Thyroid gland (tissue), 4 donors: ENCODE measurements at regions of chr12 and their contacts with region 1.

Region 1: GRCh38 chr12:64256166-64256800 is 34.2 kb upstream of the KICS2 start:
- DNase-seq: no peak
- H3K4me3 ChIP-seq: no peak overlapping the region
- H3K27ac ChIP-seq: no peak overlapping the region
- H3K4me1 ChIP-seq: no peaks in the 10 kb centered on the region
- H3K27me3 ChIP-seq: no peaks in the 10 kb centered on the region
- CTCF ChIP-seq: peak; percentile 31 to 86 (median 64)
- POLR2A ChIP-seq: no peak

Region 2: DNA sequence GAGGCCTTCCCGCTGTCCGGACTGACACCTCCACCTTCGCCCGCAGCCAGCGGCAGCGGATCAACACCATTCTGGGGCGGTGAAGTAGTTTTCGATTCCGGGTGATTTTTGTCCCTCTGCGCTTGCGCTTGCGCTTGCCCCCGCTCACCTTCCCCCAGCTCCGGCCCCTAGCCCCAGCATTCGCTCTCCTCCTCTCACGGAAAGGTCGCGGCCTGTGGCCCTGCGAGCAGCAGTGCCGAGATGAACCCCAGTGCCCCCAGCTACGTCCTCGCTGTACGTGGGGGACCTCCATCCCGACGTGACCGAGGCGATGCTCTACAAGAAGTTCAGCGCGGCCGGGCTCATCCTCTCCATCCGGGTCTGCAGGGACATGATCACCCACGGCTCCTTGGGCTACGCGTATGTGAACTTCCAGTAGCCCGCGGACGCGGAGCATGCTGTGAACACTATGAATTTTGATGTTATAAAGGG is 434.5 kb before region 1 on chr12:
- intact Hi-C with region 1: loop called (anchors 5 kb)
- DNase-seq: peak; percentile 11 to 16
- H3K4me3 ChIP-seq: peak overlapping the region in 1 of 3 donors; percentile 21
- H3K27ac ChIP-seq: no peak overlapping the region
- H3K4me1 ChIP-seq: no peaks in the 10 kb centered on the region
- H3K27me3 ChIP-seq: no peaks in the 10 kb centered on the region
- CTCF ChIP-seq: no peak
- POLR2A ChIP-seq: no peak

Region 3: GRCh38 chr12:63838411-63838810 is 417.9 kb before region 1 on chr12:
- intact Hi-C with region 1: loop called (anchors 2 kb)
- DNase-seq: no peak
- H3K4me3 ChIP-seq: no peak overlapping the region
- H3K27ac ChIP-seq: no peak overlapping the region
- H3K4me1 ChIP-seq: no peaks in the 10 kb centered on the region
- H3K27me3 ChIP-seq: no peaks in the 10 kb centered on the region
- CTCF ChIP-seq: no peak
- POLR2A ChIP-seq: no peak

Region 4: GRCh38 chr12:64019118-64019517 is 237.2 kb before region 1 on chr12:
- intact Hi-C with region 1: no loop called
- DNase-seq: no peak
- H3K4me3 ChIP-seq: no peak overlapping the region
- H3K27ac ChIP-seq: no peak overlapping the region
- H3K4me1 ChIP-seq: peaks cover 22 to 23% of the 10 kb centered on the region in 2 donors
- H3K27me3 ChIP-seq: no peaks in the 10 kb centered on the region
- CTCF ChIP-seq: no peak
- POLR2A ChIP-seq: no peak

Region 5: DNA sequence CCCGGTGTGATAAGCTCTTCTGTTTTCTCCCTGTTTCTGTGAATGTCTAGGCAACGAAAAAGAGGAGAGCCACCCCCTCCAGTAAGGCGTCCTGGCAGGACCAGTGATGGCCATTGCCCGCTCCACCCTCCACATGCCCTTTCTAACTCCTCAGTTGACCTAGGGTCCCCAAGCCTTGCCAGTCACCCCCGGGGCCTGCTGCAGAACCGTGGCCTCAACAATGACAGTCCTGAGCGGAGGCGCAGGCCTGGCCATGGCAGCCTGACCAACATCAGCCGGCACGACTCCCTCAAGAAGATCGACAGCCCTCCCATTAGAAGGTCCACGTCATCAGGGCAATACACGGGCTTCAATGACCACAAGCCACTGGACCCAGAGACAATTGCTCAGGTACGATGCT is 128.5 kb before region 1 on chr12:
- intact Hi-C with region 1: no loop called
- DNase-seq: no peak
- H3K4me3 ChIP-seq: no peak overlapping the region
- H3K27ac ChIP-seq: no peak overlapping the region
- H3K4me1 ChIP-seq: no peaks in the 10 kb centered on the region
- H3K27me3 ChIP-seq: no peaks in the 10 kb centered on the region
- CTCF ChIP-seq: no peak
- POLR2A ChIP-seq: no peak

Region 6: DNA sequence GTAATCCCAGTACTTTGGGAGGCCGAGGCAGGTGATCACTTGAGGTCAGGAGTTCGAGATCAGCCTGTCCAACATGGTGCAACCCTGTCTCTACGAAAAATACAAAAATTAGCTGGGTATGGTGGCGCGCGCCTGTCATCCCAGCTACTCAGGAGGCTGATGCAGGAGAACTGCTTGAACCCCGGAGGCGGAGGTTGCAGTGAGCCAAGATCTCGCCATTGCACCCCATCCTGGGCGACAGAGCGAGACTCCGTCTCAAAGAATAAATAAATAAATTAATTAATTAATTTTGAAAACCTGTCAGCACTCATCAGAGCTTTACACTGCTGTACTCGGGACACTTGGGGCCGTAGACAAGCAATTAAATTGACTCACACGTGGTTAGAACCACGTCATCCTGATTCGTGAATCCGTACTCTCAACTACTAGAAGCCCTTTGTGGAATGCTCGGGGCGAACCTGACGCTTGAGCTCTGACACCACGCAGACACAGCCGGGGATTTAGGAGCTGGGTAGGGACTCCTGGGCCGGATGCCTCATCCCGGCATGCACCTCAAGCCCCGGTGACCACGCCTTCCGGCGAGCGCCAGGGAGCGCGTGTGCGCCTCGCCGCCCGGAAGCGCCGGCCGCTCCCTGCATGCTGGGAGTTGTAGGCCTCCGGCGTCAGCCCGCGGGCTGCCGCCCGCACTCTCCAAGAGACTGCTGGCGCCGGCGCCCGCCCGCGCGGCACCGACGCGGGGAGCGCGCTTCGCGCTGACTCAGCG is 147.6 kb after region 1 on chr12 and contains the start of gene XPOT:
- intact Hi-C with region 1: no loop called
- DNase-seq: peak; percentile 94 to 95
- H3K4me3 ChIP-seq: peak within 1 kb of the TSS; percentile 71 to 99 (median 90)
- H3K27ac ChIP-seq: peak within 1 kb of the TSS; percentile 95 to 96 (median 96)
- H3K4me1 ChIP-seq: peaks cover 8 to 13% of the 10 kb centered on the region in 2 donors
- H3K27me3 ChIP-seq: no peaks in the 10 kb centered on the region
- CTCF ChIP-seq: no peak
- POLR2A ChIP-seq: peak in 1 of 2 donors; percentile 86
- total RNA-seq, gene XPOT: 54.7 to 85.5 (median 63.6) TPM